Activated CD4-positive, alpha-beta memory T cell treated with anti-CD3 and anti-CD28 coated beads for 36 hours (primary cell): ENCODE measurements at regions of chr6 and their contacts with region 1.

Region 1: GRCh38 chr6:44265007-44265721 is at the start of gene NFKBIE:
- DNase-seq: peak; percentile 98
- H3K4me3 Mint-ChIP-seq: peak within 1 kb of the TSS; percentile 97
- H3K27ac Mint-ChIP-seq: peak within 1 kb of the TSS; percentile 94
- H3K4me1 Mint-ChIP-seq: peaks cover 49% of the 10 kb centered on the region
- H3K27me3 Mint-ChIP-seq: peaks cover 18% of the 10 kb centered on the region
- total RNA-seq, gene NFKBIE: 24.7 to 25.1 TPM

Region 2: GRCh38 chr6:43774776-43775534 is 490.2 kb before region 1 on chr6:
- CTCF ChIA-PET with region 1: no interaction called
- POLR2A ChIA-PET with region 1: no interaction called
- intact Hi-C with region 1: no loop called
- DNase-seq: peak; percentile 75
- H3K4me3 Mint-ChIP-seq: no peak overlapping the region
- H3K27ac Mint-ChIP-seq: no peak overlapping the region
- H3K4me1 Mint-ChIP-seq: peaks cover 30% of the 10 kb centered on the region
- H3K27me3 Mint-ChIP-seq: peaks cover 8% of the 10 kb centered on the region

Region 3: DNA sequence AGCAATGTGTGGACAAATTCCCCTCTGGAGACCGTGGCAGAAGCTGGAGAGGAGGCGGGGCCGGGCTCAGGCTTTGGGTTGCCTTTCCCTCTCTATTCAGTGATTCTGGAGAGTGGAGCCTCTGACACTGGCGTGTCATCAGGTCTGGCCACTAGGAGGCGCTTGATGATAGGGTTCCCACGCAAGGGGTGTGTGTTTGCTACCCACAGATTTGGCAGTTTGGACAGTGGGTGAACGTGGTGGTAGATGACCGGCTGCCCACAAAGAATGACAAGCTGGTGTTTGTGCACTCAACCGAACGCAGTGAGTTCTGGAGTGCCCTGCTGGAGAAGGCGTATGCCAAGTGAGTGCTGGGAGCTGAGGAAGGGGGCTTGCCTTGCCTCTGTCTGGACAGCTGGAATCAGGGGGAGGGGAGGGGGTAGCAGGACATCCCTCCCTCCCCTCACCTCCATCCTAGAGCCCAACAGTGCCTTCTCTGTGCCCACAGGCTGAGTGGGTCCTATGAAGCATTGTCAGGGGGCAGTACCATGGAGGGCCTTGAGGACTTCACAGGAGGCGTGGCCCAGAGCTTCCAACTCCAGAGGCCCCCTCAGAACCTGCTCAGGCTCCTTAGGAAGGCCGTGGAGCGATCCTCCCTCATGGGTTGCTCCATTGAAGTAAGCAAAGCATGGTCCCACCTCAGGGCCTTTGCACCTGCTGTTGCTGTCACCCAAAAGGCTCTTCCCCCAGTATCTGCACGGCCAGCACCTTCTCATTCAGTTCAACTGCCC is 92.2 kb before region 1 on chr6:
- CTCF ChIA-PET with region 1: interaction called, 17 read pairs
- POLR2A ChIA-PET with region 1: no interaction called
- intact Hi-C with region 1: loop called (anchors 1 kb)
- DNase-seq: peak; percentile 87
- H3K4me3 Mint-ChIP-seq: no peak overlapping the region
- H3K27ac Mint-ChIP-seq: peak overlapping the region; percentile 9
- H3K4me1 Mint-ChIP-seq: peaks cover 18% of the 10 kb centered on the region
- H3K27me3 Mint-ChIP-seq: peaks cover 21% of the 10 kb centered on the region

Region 4: DNA sequence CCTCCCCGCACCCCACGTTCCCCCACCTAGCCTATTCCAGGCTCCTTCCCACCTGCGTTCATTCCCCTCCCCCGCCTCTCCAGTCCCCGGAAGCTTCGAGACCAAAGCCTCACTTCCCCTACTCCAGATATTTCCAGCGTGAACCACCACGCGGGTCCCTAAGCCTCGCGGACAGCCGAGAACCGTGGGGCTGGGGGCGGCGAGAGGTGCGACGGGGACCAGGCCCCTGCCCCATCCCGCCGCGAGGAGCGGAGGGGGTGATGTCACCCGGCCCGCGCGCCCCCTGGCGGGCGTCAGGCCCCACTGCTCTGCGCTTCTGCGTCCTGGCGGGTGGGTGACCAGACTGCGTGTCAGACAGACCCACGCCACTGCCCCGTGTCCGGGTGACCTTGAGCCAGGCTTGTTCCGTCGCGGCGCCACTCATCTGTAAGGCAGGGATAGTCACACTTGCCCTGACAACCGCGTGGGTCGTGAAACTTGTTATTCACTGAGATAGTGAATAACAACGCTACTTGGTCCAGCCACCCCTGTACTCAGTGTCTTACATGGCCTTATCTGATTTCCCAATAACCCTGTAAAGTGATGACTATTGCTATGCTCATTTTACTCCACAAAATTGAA is 27.2 kb before region 1 on chr6:
- CTCF ChIA-PET with region 1: interaction called, 7 read pairs
- POLR2A ChIA-PET with region 1: interaction called, 3 read pairs
- intact Hi-C with region 1: loop called (anchors 2 kb)
- DNase-seq: peak; percentile 87
- H3K4me3 Mint-ChIP-seq: peak overlapping the region; percentile 83
- H3K27ac Mint-ChIP-seq: peak overlapping the region; percentile 95
- H3K4me1 Mint-ChIP-seq: peaks cover 29% of the 10 kb centered on the region
- H3K27me3 Mint-ChIP-seq: no peaks in the 10 kb centered on the region

Region 5: DNA sequence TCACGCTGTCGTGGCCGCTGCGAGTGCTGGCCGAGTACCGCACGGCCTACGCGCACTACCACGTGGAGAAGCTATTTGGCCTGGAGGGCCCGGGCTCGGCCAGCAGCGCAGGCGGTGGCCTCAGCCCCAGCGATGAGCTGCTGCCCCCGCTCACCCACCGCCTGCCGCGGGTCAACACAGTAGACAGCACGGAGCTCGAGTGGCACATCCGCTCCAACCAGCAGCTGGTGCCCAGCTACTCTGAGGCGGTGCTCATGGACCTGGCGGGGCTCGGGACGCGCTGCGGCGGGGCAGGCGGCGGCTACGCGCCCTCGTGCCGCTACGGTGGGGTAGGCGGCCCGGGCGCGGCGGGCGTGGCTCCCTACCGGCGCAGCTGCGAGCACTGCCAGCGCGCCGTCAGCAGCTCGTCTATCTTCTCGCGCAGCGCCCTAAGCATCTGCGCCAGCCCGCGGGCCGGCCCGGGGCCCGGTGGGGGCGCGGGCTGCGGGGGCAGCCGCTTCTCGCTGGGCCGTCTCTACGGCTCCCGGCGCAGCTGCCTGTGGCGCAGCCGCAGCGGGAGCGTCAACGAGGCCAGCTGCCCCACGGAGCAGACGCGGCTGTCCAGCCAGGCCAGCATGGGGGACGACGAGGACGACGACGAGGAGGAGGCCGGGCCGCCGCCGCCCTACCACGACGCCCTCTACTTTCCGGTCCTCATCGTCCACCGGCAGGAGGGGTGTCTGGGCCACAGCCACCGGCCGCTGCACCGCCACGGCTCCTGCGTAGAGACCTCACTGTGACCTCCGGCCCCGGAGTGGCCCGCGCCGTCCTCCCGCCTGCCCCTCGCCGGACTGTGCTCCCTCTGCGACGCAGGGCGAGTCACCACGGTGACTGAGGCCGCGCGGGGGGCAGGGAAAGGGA is 10.8 kb after region 1 on chr6:
- CTCF ChIA-PET with region 1: interaction called, 10 read pairs
- POLR2A ChIA-PET with region 1: no interaction called
- intact Hi-C with region 1: no loop called
- DNase-seq: peak; percentile 37
- H3K4me3 Mint-ChIP-seq: no peak overlapping the region
- H3K27ac Mint-ChIP-seq: no peak overlapping the region
- H3K4me1 Mint-ChIP-seq: peaks cover 3% of the 10 kb centered on the region
- H3K27me3 Mint-ChIP-seq: peaks cover 54% of the 10 kb centered on the region

Region 6: DNA sequence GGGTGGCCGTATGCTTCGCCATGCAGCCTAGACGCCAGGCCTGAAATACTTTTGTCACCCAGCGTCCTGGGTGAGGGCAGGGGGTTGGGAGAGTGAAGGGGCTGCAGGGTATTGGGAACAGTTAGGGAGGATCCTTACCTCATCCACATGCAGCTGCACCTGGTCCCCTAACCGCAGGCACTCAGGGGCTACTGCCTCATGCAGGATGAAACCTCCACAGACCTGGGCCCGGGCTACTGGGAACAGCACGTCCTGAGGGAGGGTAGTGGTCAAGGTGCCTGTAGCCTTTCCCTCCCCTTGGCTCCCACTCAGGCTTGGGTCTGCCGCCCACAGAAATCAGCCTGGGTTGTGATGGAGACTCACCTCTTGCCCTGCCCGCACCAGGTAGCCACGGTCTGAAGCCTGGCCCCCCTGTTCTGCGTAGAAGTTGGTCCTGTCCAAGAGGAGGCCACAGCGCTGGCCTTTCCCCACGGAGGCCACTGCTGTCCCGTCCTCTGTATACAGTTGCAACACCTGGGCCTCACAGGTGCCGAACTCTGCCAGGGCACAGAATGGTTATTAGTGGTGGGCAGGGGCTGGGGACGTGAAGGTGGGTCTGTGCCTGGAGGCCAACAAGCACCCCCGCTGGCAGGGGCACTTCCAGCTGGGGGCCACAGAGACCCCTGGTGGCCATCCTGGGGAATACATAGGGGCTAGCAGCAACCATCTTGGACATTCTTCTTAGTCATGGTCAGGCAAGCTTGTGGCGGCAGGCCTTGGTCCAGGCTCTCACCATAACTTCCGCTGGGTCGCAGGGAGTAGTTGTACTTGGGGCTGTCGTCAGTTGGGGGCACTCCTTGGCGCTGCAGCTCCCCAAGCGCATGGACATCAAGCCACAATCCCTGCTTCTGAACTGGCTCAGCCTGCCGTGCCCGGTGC is 39.4 kb after region 1 on chr6:
- CTCF ChIA-PET with region 1: interaction called, 66 read pairs
- POLR2A ChIA-PET with region 1: no interaction called
- intact Hi-C with region 1: loop called (anchors 1 kb)
- DNase-seq: peak; percentile 45
- H3K4me3 Mint-ChIP-seq: no peak overlapping the region
- H3K27ac Mint-ChIP-seq: no peak overlapping the region
- H3K4me1 Mint-ChIP-seq: no peaks in the 10 kb centered on the region
- H3K27me3 Mint-ChIP-seq: no peaks in the 10 kb centered on the region

Region 7: DNA sequence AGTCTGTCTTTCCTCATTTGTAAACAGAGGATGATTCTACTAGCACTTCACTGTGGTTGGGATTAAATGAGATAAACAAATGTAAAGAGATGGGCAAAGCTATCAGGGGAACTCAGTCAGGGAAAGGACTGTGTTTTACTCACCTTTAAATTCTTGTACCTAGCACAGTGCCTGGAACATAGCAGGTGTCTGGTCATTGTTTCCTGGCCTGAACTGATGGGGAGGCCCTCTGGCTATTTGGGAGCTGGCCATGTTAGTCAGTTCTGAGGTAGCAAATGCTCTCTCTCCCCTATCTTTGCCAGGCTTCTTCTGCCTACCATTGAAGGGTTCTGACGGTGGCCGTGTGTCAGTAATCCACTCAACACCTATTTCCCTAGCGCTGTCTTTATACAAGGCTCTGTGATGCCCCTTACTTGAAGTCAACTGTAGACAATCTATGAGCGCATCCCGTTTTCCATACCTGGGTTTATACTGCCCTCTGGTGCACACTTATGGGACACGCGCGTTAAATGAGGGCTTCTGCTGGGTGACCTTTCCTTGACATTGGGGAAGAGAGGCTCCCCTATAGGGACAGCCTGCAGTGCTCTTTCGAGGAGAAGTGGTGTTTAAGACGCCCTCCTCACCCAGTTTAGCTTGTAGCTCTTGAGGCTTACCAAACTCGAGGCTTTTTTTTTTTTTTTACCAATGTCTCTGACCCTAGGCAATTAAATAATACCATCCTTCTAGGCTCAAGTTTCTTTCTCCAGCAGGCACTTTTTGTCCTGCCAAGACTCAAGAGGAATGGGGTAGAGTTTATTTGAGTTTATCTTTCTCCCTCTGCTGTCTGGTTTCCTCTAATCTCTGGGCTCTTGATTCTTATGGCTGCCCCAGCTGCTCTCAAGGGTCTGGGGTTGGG is 73.3 kb after region 1 on chr6:
- CTCF ChIA-PET with region 1: interaction called, 184 read pairs
- POLR2A ChIA-PET with region 1: no interaction called
- intact Hi-C with region 1: loop called (anchors 1 kb)
- DNase-seq: peak; percentile 79
- H3K4me3 Mint-ChIP-seq: no peak overlapping the region
- H3K27ac Mint-ChIP-seq: peak overlapping the region; percentile 8
- H3K4me1 Mint-ChIP-seq: peaks cover 3% of the 10 kb centered on the region
- H3K27me3 Mint-ChIP-seq: peaks cover 19% of the 10 kb centered on the region

Region 8: DNA sequence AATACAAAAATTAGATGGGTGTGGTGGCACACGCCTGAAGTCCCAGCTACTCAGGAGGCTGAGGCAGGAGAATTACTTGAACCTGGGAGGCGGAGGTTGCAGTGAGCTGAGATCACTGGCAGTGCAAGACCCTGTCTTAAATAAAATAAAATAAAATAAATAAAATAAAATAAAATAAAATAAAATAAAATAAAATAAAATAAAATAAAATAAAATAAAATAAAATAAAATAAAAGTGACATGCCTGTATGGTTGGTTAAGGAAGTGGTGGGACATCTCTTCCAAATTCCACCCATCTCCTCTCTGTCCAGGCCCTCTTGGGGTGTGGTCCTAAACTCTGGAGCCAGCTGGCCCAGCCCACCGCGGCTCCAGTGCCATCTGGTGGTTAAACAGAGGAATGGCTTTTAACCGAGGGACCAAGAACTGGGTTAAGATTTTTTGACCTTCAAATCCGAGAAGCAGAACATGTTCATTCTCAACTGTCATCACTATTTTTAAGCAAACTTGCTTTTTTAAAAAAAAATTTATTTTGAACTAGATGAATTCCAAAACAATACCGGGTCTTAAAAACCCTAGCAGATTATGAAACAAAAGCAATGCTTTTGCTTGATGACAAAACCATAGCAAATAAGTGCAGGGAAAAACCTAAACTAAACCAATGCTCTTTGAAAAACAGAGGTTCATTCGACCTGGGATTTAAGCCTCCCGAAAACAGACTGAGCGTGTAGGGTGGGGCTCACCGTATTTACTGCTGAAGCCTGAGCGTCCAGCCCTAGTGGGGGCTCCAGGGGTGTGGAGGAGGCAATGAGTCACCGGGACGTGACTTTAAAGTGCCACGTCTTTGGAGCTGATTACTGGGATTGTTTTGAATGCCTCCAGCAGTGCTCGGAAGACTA is 191.2 kb after region 1 on chr6:
- CTCF ChIA-PET with region 1: interaction called, 8 read pairs
- POLR2A ChIA-PET with region 1: interaction called, 3 read pairs
- intact Hi-C with region 1: loop called (anchors 1 kb)
- DNase-seq: peak; percentile 57
- H3K4me3 Mint-ChIP-seq: no peak overlapping the region
- H3K27ac Mint-ChIP-seq: no peak overlapping the region
- H3K4me1 Mint-ChIP-seq: peaks cover 3% of the 10 kb centered on the region
- H3K27me3 Mint-ChIP-seq: no peaks in the 10 kb centered on the region